ENCODE measurements at regions of chr15 and their contacts with region 1.

Region 1: GRCh38 chr15:51341366-51342226 is at the start of gene GLDN:
- DNase-seq: peak; percentile 69 to 98 (median 82)

Region 2: DNA sequence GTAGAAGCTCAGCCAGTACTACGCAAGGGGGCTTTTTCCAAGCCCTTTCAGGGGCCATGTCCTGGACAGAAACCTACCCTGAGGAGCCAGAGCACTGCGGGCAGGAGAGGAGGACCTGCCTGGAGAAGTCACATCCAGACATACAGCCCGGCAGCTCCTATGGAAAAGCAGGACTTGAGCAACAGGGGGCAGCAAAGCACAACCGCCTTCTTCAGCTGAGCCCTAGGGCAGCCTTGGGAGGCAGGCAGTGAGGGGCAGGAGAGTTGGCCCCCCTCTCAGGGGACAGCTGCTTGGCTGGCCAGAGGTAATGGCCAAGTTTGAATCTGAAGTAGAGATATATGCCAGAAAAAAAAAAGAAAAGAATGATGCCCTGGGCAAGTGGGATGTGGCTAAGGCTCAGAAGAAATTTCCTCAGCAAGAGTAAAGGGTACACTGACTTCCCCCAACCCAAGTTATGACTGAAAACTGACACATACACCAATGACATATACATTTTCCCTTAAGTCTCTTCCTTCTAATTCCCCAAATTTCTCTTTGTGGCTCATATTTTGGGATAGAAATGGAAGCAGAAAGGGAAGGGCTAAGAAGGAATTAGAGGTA is 60.1 kb before region 1 on chr15:
- intact Hi-C with region 1: loop called (anchors 2 kb)
- DNase-seq: peak; percentile 45 to 97 (median 82)

Region 3: GRCh38 chr15:51299187-51300066 is 42.2 kb before region 1 on chr15:
- intact Hi-C with region 1: loop called (anchors 5 kb)
- DNase-seq: peak in 2 of 10 donors; percentile 24 to 36